IMR-90 (cell line): ENCODE measurements at regions of chr6 and their contacts with region 1.

Region 1: DNA sequence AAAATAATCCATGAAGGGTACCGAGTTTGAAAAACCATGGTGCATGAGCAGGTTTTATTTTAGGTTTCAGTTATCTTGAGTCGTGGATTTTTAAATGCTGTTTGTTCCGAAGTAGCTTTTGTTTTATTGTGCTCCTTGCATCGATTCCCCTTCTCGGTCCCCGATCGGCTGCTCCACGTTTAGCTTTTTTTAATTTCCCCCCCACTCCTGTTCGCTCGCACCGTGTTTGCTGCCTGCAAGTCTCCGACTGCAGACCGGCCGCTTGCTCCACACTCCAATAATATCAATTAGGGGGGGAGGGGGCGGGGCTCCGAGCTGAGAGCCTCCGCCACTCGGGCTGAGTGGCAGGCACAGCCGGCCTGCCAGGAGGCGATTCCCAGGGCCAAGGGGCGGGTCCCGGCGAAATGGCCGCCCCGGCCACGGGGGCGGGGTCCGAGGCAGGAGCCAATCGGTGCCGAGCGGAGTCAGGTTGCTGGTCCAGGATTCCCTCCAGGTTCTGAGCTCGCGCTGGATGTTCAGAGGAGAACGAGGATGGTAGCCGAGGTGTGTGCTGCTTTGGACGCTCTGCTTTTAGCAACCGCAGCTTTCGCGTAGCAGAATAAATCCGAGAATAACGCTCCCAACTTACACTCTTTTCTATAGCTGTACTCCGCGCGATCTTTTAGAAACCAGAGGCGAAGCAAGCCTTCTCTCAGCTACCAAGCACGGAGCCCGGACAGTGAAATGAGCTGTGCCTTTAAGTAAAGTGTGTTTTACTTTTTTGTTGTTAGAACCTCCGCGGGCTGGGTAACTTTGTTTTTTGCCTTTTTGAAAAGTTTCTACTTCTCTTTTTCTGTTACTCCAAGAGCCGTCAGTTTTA is at the start of gene EPHA7:
- DNase-seq: peak; percentile 76
- ATAC-seq: peak; percentile 98
- H3K4me3 ChIP-seq: peak within 1 kb of the TSS; percentile 32
- H3K27ac ChIP-seq: no peak within 1 kb of the TSS
- H3K4me1 ChIP-seq: no peaks in the 10 kb centered on the region; the same call in 1 of the 2 replicates
- H3K27me3 ChIP-seq: peaks cover 29% of the 10 kb centered on the region
- CTCF ChIP-seq: no peak
- POLR2A ChIP-seq: no peak
- RAD21 ChIP-seq: no peak
- total RNA-seq, gene EPHA7: not detected in 2 replicates

Region 2: GRCh38 chr6:92810913-92811312 is 608.6 kb before region 1 on chr6:
- CTCF ChIA-PET with region 1: no interaction called
- POLR2A ChIA-PET with region 1: no interaction called
- dilution Hi-C with region 1: no loop called
- in situ Hi-C with region 1: no loop called
- intact Hi-C with region 1: loop called (anchors 10 kb)
- DNase-seq: peak; percentile 27
- ATAC-seq: peak; percentile 77
- H3K4me3 ChIP-seq: no peak overlapping the region
- H3K27ac ChIP-seq: no peak overlapping the region
- H3K4me1 ChIP-seq: no peaks in the 10 kb centered on the region
- H3K27me3 ChIP-seq: no peaks in the 10 kb centered on the region
- CTCF ChIP-seq: peak; percentile 42
- POLR2A ChIP-seq: no peak
- RAD21 ChIP-seq: 0 out of 2 replicates have a peak, but pooled peaks have one; percentile 32

Region 3: DNA sequence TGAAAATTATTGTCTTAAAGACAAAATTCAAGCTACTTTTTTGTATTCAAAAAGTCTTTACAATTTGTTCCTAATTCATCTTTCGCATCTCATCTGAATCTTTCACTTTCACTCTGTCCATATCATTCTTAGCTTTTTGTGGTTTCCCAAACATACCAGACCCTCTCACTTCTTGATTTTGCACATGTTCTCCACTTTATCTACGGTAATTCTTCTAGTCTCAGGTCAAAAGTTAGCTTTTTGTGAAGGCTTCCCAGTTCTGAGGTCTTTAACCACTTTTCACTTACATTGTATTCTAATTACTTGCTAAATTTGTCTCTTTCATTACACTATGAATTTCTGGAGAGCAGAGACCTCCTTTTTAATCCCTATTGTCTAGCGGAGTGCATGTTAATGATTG is 34.4 kb after region 1 on chr6:
- CTCF ChIA-PET with region 1: no interaction called
- POLR2A ChIA-PET with region 1: no interaction called
- dilution Hi-C with region 1: no loop called
- in situ Hi-C with region 1: no loop called
- intact Hi-C with region 1: no loop called
- DNase-seq: no peak
- ATAC-seq: no peak
- H3K4me3 ChIP-seq: no peak overlapping the region
- H3K27ac ChIP-seq: no peak overlapping the region
- H3K4me1 ChIP-seq: no peaks in the 10 kb centered on the region
- H3K27me3 ChIP-seq: no peaks in the 10 kb centered on the region
- CTCF ChIP-seq: no peak
- POLR2A ChIP-seq: no peak
- RAD21 ChIP-seq: no peak

Region 4: GRCh38 chr6:94005835-94006234 is 586.3 kb after region 1 on chr6:
- CTCF ChIA-PET with region 1: no interaction called
- POLR2A ChIA-PET with region 1: no interaction called
- dilution Hi-C with region 1: no loop called
- in situ Hi-C with region 1: no loop called
- intact Hi-C with region 1: no loop called
- DNase-seq: no peak
- ATAC-seq: no peak
- H3K4me3 ChIP-seq: no peak overlapping the region
- H3K27ac ChIP-seq: no peak overlapping the region
- H3K4me1 ChIP-seq: no peaks in the 10 kb centered on the region
- H3K27me3 ChIP-seq: no peaks in the 10 kb centered on the region
- CTCF ChIP-seq: no peak
- POLR2A ChIP-seq: no peak
- RAD21 ChIP-seq: no peak

Region 5: DNA sequence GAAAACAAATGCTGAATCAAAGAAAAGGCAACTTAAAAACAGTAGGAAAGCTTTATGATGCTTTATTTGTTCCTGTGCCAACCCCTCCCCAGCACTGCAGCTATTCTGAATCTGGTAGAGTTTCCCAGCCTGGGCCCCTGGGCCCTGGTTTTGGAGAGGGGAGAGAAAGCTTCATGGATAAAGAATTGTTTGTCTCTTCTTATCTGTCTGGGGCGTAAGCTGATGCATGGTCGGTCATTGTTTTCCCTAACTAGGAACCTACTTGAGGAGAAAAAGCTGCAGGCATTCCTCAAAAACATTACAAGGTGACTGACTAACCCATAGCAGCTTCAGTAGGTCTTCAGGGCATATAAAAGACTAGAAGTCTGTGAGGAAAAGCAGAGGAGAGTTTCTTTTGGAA is 757.9 kb after region 1 on chr6:
- CTCF ChIA-PET with region 1: no interaction called
- POLR2A ChIA-PET with region 1: no interaction called
- dilution Hi-C with region 1: no loop called
- in situ Hi-C with region 1: no loop called
- intact Hi-C with region 1: no loop called
- DNase-seq: no peak
- ATAC-seq: no peak
- H3K4me3 ChIP-seq: no peak overlapping the region
- H3K27ac ChIP-seq: no peak overlapping the region
- H3K4me1 ChIP-seq: no peaks in the 10 kb centered on the region
- H3K27me3 ChIP-seq: no peaks in the 10 kb centered on the region
- CTCF ChIP-seq: no peak
- POLR2A ChIP-seq: no peak
- RAD21 ChIP-seq: no peak